ENCODE measurements at regions of chr6 and their contacts with region 1.

Region 1: GRCh38 chr6:6057424-6058053 is 50.8 kb upstream of the NRN1 start:
- DNase-seq: no peak
- H3K4me3 ChIP-seq: no peak overlapping the region
- H3K27ac ChIP-seq: no peak overlapping the region
- H3K4me1 ChIP-seq: no peaks in the 10 kb centered on the region
- H3K27me3 ChIP-seq: peaks cover 0 to 27% (median 0%) of the 10 kb centered on the region in 4 donors
- CTCF ChIP-seq: peak in 5 of 6 experiments; percentile 39 to 64 (median 47)
- POLR2A ChIP-seq: no peak

Region 2: DNA sequence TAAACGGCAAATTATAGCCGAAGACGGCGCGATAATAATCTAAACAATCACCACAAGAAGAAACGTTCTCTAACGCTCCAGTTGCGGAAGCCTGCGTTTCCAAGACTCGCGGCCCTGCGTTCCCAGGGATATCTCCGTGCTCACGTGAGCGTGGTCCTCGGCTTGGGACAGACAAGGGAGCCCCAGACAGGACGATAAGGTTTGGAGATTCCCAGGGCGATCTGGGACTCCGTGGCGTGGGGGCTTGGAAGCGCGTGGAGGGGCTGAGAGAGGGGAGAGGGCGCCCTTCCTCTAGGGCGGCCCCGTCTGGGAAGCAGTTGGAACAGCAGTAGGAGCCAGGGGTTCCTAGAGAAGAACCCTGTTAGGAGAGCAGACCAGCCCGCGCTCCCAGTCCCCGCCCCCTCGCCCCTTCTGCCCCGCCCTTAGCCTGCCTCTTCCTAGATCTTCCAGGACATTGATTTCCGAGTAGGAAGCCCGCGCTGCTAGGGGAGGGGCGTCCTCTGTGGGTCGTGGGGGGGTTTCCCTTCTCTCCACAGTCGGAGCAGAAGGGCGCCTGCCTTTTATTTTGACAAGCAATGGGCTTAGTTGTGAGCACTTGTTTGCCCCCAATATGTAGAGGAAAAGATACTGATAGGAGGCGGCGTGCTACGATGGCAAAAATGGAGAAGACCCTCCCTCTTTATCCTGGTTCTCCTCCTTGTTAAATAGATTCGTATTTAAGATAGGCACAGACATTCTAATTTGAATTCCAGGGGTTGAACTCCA is 61.4 kb before region 1 on chr6:
- intact Hi-C with region 1: no loop called
- DNase-seq: no peak
- H3K4me3 ChIP-seq: peak overlapping the region; percentile 42 to 77 (median 57)
- H3K27ac ChIP-seq: peak overlapping the region in 3 of 4 donors; percentile 62 to 73 (median 64)
- H3K4me1 ChIP-seq: peaks cover 25 to 56% (median 30%) of the 10 kb centered on the region in 3 donors
- H3K27me3 ChIP-seq: peaks cover 47 to 100% (median 61%) of the 10 kb centered on the region in 4 donors
- CTCF ChIP-seq: no peak
- POLR2A ChIP-seq: no peak

Region 3: GRCh38 chr6:6547110-6547879 is 489.8 kb after region 1 on chr6:
- intact Hi-C with region 1: loop called (anchors 5 kb)
- DNase-seq: peak; percentile 25
- H3K4me3 ChIP-seq: peak overlapping the region; percentile 24 to 67 (median 43)
- H3K27ac ChIP-seq: peak overlapping the region in 2 of 4 donors; percentile 18 to 27
- H3K4me1 ChIP-seq: peaks cover 10 to 15% (median 13%) of the 10 kb centered on the region in 3 donors
- H3K27me3 ChIP-seq: peaks cover 0 to 74% (median 7%) of the 10 kb centered on the region in 4 donors
- CTCF ChIP-seq: peak; percentile 88 to 95 (median 94)
- POLR2A ChIP-seq: no peak

Measured in esophagus squamous epithelium (tissue), 5 donors.